SK-N-SH (cell line): ENCODE measurements at regions of chr9 and their contacts with region 1.

Region 1: GRCh38 chr9:87503927-87504326 is 6.3 kb downstream of the DAPK1 start:
- DNase-seq: no peak
- H3K4me3 ChIP-seq: no peak overlapping the region
- H3K27ac ChIP-seq: no peak overlapping the region
- H3K4me1 ChIP-seq: peaks cover 0 to 11% of the 10 kb centered on the region in 2 experiments; a peak in 2 of 4 replicates
- H3K27me3 ChIP-seq: peaks cover 6% of the 10 kb centered on the region; the same call in 1 of the 2 replicates
- CTCF ChIP-seq: no peak
- EP300 ChIP-seq: no peak
- RAD21 ChIP-seq: no peak

Region 2: DNA sequence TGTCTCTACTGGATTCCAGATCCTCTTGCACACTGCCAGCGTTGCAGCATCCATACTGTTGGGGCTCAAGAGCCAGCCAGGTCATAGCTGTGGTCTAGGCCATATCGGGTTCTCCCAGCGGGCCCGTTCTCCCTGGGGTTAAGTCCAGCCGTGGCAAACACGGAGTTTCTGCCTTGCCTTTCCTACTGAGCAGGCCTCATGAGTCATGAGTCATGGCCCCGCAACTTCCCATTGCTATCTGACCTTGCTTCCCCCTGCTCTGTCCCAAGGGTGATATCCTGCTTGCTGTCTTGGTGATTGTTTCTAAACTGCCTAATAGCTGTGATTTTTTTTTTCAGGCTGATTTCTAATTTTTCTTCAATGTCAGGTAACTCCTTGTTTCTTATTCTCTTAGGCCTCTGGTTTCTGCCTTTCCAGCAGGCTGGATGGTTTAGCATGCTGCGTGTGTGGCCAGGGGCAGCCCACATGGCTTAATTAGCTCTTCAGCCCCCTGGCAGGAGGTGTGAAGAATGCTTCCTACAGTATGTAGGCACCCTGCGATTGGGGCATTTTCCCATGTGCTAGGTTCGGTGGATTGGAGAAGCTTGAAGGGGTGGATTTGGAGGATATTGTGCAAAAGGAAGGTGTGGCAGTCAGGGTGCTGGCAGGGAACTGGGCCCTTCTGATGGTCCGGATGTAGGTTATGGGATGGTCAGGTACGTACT is 12.4 kb after region 1 on chr9:
- CTCF ChIA-PET with region 1: interaction called, 11 read pairs
- POLR2A ChIA-PET with region 1: interaction called, 4 read pairs
- DNase-seq: no peak
- H3K4me3 ChIP-seq: no peak overlapping the region; a peak in 1 of 4 replicates
- H3K27ac ChIP-seq: no peak overlapping the region
- H3K4me1 ChIP-seq: peaks cover 0 to 16% of the 10 kb centered on the region in 2 experiments; a peak in 2 of 4 replicates
- H3K27me3 ChIP-seq: no peaks in the 10 kb centered on the region
- CTCF ChIP-seq: no peak
- EP300 ChIP-seq: no peak
- RAD21 ChIP-seq: no peak